Activated CD4-positive, alpha-beta T cell treated with anti-CD3 and anti-CD28 coated beads for 36 hours (primary cell): ENCODE measurements at regions of chr6 and their contacts with region 1.

Region 1: DNA sequence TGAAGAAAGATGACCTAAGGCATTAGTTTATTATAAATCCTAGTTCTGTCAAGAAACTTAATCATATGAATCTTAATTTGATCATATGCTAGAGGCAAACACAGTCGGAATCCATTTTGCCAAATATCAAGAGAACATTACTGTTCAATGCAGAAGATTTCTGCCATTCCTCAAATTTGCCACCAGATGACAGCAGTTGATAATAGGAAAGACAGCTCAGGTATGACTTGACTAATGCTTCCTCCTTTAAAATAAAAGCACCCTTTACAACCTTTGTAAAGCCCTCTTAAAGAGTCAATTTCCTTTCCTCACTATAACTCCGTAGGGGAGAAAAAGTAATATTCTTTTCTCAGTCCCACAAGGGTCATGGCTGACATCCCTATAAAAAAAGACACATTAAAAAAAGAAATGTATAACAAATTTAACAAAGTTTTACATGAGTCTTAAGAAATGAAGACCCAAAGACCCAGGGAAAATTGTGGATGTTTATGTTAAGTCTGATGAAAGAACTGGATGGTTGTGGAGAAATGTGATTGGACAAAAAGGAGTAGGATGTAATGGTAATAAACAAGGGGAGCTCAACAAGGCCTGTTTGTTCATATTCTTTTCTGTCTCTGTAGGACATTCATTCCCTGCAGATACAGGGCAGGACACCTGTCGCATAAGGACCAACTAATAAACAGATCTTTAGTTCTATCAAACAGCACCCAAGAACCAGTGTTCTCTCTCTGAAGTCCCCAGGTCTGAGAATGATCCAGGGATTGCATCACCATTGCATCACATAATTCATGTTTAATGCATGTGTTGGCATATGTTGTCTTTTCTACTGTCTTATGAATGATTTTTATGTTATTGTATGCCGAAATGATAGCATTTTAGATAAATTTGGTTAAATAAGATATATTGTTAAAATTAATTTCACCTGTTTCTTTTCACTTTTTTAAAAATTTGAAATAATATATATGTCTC is 23.0 kb upstream of the IL17A start:
- DNase-seq: no peak
- ATAC-seq: peak; percentile 27
- H3K4me3 Mint-ChIP-seq: no peak overlapping the region
- H3K27ac Mint-ChIP-seq: peak overlapping the region; percentile 88
- H3K4me1 Mint-ChIP-seq: peaks cover 58% of the 10 kb centered on the region
- H3K27me3 Mint-ChIP-seq: peaks cover 14% of the 10 kb centered on the region

Region 2: DNA sequence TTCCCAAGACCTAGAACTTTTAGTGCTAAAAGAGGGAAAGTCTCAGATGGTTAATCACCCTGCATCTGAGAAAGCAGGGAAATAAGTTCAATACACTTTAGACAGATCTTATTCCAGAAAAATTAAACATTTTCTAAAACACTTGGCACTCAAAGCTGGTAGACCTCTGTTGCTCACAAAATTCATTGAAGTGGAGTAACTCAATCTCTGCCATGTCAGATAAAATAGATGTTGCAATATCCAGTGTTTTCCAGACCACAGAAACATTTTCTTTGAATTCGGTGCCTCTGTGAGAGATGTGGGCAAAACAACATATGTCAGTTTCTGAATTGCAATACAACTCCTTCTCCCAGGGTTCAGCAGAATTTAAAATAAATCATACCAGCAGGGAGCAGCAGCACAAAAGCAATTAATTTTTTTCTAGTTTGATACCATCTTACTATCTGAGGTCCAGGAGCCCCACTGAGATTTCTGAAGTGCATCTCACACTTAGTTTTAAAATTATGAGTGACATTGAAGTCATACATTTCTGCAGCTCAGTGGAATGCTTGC is 64.5 kb before region 1 on chr6:
- CTCF ChIA-PET with region 1: interaction called, 8 read pairs
- POLR2A ChIA-PET with region 1: no interaction called
- intact Hi-C with region 1: loop called (anchors 2 kb)
- DNase-seq: no peak
- ATAC-seq: peak; percentile 58
- H3K4me3 Mint-ChIP-seq: no peak overlapping the region
- H3K27ac Mint-ChIP-seq: no peak overlapping the region
- H3K4me1 Mint-ChIP-seq: peaks cover 2% of the 10 kb centered on the region
- H3K27me3 Mint-ChIP-seq: peaks cover 33% of the 10 kb centered on the region

Region 3: DNA sequence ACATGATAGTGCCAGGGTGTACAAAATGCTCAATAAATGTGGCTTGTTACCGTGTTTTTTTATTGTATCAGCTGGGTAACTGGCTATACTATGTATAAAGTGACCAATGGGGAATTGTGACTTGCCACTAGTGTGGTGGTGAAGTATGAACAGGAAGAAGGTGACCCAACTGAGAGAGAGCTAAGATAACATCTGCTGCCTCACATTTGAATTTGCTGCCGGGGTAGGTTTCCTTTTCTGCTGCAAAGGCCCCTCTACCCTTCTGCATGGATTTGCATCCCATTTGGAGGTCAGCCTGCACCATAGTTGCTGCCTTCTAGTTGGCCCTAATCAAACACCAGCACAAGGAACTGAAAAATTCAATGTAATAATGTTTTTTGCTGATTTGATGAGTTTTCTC is 47.0 kb after region 1 on chr6:
- CTCF ChIA-PET with region 1: interaction called, 6 read pairs
- POLR2A ChIA-PET with region 1: no interaction called
- intact Hi-C with region 1: loop called in 1 of 2 experiments (anchors 2 kb)
- DNase-seq: no peak
- ATAC-seq: peak; percentile 14
- H3K4me3 Mint-ChIP-seq: no peak overlapping the region
- H3K27ac Mint-ChIP-seq: peak overlapping the region; percentile 44
- H3K4me1 Mint-ChIP-seq: peaks cover 22% of the 10 kb centered on the region
- H3K27me3 Mint-ChIP-seq: peaks cover 10% of the 10 kb centered on the region

Region 4: GRCh38 chr6:52253494-52253893 is 90.3 kb after region 1 on chr6:
- CTCF ChIA-PET with region 1: interaction called, 11 read pairs
- POLR2A ChIA-PET with region 1: interaction called, 3 read pairs
- intact Hi-C with region 1: loop called (anchors 2 kb)
- DNase-seq: peak; percentile 76
- ATAC-seq: peak; percentile 53
- H3K4me3 Mint-ChIP-seq: no peak overlapping the region
- H3K27ac Mint-ChIP-seq: peak overlapping the region; percentile 72
- H3K4me1 Mint-ChIP-seq: peaks cover 48% of the 10 kb centered on the region
- H3K27me3 Mint-ChIP-seq: peaks cover 22% of the 10 kb centered on the region

Region 5: GRCh38 chr6:52389626-52390360 is 226.6 kb after region 1 on chr6:
- CTCF ChIA-PET with region 1: interaction called, 4 read pairs
- POLR2A ChIA-PET with region 1: interaction called, 5 read pairs
- intact Hi-C with region 1: loop called (anchors 1 kb)
- DNase-seq: peak; percentile 74
- ATAC-seq: peak; percentile 52
- H3K4me3 Mint-ChIP-seq: peak overlapping the region; percentile 38
- H3K27ac Mint-ChIP-seq: peak overlapping the region; percentile 86
- H3K4me1 Mint-ChIP-seq: peaks cover 85% of the 10 kb centered on the region
- H3K27me3 Mint-ChIP-seq: no peaks in the 10 kb centered on the region

Region 6: GRCh38 chr6:52635049-52635577 is 471.9 kb after region 1 on chr6:
- CTCF ChIA-PET with region 1: no interaction called
- POLR2A ChIA-PET with region 1: no interaction called
- intact Hi-C with region 1: loop called in 1 of 2 experiments (anchors 5 kb)
- DNase-seq: peak; percentile 62
- ATAC-seq: peak; percentile 93
- H3K4me3 Mint-ChIP-seq: peak overlapping the region; percentile 24
- H3K27ac Mint-ChIP-seq: peak overlapping the region; percentile 87
- H3K4me1 Mint-ChIP-seq: peaks cover 18% of the 10 kb centered on the region
- H3K27me3 Mint-ChIP-seq: peaks cover 6% of the 10 kb centered on the region

Region 7: GRCh38 chr6:52697903-52698302 is 534.7 kb after region 1 on chr6:
- CTCF ChIA-PET with region 1: no interaction called
- POLR2A ChIA-PET with region 1: no interaction called
- intact Hi-C with region 1: no loop called
- DNase-seq: no peak
- ATAC-seq: no peak
- H3K4me3 Mint-ChIP-seq: no peak overlapping the region
- H3K27ac Mint-ChIP-seq: no peak overlapping the region
- H3K4me1 Mint-ChIP-seq: no peaks in the 10 kb centered on the region
- H3K27me3 Mint-ChIP-seq: peaks cover 4% of the 10 kb centered on the region